Brain microvascular endothelial cell (primary cell): ENCODE measurements at regions of chr14 and their contacts with region 1.

Region 1: GRCh38 chr14:61837336-61838229 is 75.4 kb downstream of the SNAPC1 start:
- DNase-seq: peak; percentile 81
- H3K4me3 ChIP-seq: no peak overlapping the region
- H3K27ac ChIP-seq: peak overlapping the region; percentile 84
- H3K27me3 ChIP-seq: no peaks in the 10 kb centered on the region
- CTCF ChIP-seq: peak; percentile 94

Region 2: GRCh38 chr14:61461808-61462275 is 375.7 kb before region 1 on chr14:
- in situ Hi-C with region 1: loop called (anchors 10 kb)
- DNase-seq: peak; percentile 82
- H3K4me3 ChIP-seq: no peak overlapping the region
- H3K27ac ChIP-seq: peak overlapping the region; percentile 97
- H3K27me3 ChIP-seq: no peaks in the 10 kb centered on the region
- CTCF ChIP-seq: peak; percentile 48

Region 3: DNA sequence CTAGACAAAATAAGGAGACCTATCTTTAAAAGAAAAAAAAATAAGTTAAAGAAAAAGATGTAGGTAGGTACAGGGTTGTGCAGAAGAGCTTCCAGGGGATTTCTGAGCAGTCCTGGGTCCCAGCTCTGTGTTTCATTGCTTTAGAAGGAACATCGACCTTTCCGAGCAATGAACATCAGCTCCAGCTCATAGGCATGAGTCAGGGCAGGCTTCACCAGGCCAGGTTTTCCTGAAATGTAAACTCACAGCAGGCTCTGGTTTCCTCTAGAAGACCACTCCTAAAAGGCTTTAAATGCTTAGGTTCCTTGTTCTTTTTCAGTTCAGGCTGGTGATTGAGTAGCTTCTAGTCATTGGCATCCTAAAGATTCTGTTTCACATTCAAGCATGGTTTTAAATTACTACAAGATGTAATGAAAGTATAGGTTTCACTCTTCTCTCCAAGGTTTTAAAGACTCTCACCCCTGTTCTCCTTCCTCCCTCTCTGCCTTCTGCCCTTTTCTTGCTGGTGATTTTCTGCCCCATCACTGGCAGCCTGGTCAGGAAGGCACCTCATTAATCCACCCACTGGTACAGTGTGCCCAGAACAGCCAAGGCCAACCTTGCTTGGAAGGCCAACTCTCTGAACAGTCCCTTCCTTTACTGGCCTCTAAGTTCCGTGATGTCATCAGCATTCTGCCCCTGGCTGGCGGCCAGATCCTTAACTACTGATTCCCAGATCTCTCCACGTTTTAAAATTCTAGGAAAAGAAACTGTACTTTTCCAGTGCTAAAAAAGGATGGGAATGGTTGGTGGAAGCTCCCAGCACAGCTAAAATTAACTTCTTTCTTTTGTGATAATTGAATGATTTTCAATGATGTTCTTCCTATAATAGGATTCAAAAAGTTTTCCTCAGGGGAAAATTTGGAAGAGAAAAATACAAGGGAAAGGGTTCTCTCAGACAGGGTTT is 251.7 kb before region 1 on chr14:
- in situ Hi-C with region 1: no loop called
- DNase-seq: peak; percentile 82
- H3K4me3 ChIP-seq: no peak overlapping the region
- H3K27ac ChIP-seq: peak overlapping the region; percentile 89
- H3K27me3 ChIP-seq: no peaks in the 10 kb centered on the region
- CTCF ChIP-seq: no peak